ENCODE measurements at regions of chr11 and their contacts with region 1.

Region 1: DNA sequence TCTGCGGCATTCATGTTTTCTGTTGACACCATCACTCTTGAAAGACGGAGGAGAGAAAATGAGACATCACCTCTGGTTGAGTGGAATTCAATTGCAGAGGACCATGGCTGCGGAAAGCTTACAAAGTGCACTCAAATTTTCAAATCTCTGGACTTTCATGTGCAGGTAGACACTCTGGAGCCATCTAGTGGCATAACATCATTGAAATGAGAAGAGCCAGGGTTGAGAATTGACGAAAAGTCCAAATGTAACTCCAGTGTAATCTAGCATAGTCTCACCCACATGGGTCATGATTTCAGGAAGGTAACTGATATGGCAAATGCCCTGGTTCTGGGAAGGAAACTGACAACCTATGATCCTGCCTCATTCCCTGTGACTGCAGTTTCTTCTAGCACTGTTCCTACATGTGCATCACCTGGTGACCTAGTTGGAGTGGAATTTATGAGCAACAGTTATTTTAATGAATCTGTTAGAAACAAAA is 687.8 kb downstream of the KCNA4 start:
- DNase-seq: peak; percentile 95
- ATAC-seq: peak; percentile 80
- H3K4me3 ChIP-seq: no peak overlapping the region
- H3K27ac ChIP-seq: peak overlapping the region; percentile 54
- H3K4me1 ChIP-seq: peaks cover 16% of the 10 kb centered on the region
- H3K27me3 ChIP-seq: no peaks in the 10 kb centered on the region
- CTCF ChIP-seq: peak; percentile 88
- POLR2A ChIP-seq: peak; percentile 62
- RAD21 ChIP-seq: peak; percentile 89

Region 2: DNA sequence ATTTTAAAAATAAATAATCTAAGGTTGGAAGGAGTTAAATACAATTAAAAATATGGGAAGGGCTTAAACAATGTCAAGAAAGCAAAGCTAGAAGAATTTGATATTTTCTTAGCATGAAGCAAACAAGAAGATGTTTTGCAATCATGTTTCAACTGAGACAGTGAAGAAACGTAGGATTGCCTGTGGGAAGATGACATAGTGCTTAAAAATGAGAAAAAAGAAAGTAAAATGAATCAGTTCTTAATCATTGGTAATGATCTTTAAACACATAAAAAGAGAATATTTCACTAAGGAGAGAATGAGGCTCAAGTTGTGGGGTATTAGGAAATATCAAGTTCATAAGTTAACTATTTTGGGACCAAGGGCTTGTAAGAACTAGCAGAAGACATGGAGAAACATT is 365.8 kb before region 1 on chr11:
- CTCF ChIA-PET with region 1: no interaction called
- POLR2A ChIA-PET with region 1: no interaction called
- dilution Hi-C with region 1: no loop called
- in situ Hi-C with region 1: no loop called
- intact Hi-C with region 1: loop called (anchors 2 kb)
- DNase-seq: peak; percentile 83
- ATAC-seq: peak; percentile 36
- H3K4me3 ChIP-seq: no peak overlapping the region
- H3K27ac ChIP-seq: peak overlapping the region; percentile 87; the same call in 1 of the 2 replicates
- H3K4me1 ChIP-seq: peaks cover 13% of the 10 kb centered on the region
- H3K27me3 ChIP-seq: no peaks in the 10 kb centered on the region
- CTCF ChIP-seq: no peak
- POLR2A ChIP-seq: no peak
- RAD21 ChIP-seq: no peak

Region 3: GRCh38 chr11:29119707-29120695 is 209.0 kb before region 1 on chr11:
- CTCF ChIA-PET with region 1: interaction called, 3 read pairs
- POLR2A ChIA-PET with region 1: no interaction called
- dilution Hi-C with region 1: no loop called
- in situ Hi-C with region 1: no loop called
- intact Hi-C with region 1: loop called (anchors 1 kb)
- DNase-seq: peak; percentile 99
- ATAC-seq: peak; percentile 86
- H3K4me3 ChIP-seq: peak overlapping the region; percentile 23; the same call in 1 of the 2 replicates
- H3K27ac ChIP-seq: peak overlapping the region; percentile 92
- H3K4me1 ChIP-seq: peaks cover 9% of the 10 kb centered on the region
- H3K27me3 ChIP-seq: no peaks in the 10 kb centered on the region
- CTCF ChIP-seq: no peak
- POLR2A ChIP-seq: peak; percentile 26; the same call in 1 of the 2 replicates
- RAD21 ChIP-seq: peak; percentile 8; the same call in 1 of the 2 replicates

Region 4: GRCh38 chr11:29173660-29174062 is 155.3 kb before region 1 on chr11:
- CTCF ChIA-PET with region 1: no interaction called
- POLR2A ChIA-PET with region 1: no interaction called
- dilution Hi-C with region 1: no loop called
- in situ Hi-C with region 1: loop called (anchors 10 kb)
- intact Hi-C with region 1: loop called (anchors 5 kb)
- DNase-seq: peak; percentile 99
- ATAC-seq: peak; percentile 86
- H3K4me3 ChIP-seq: no peak overlapping the region
- H3K27ac ChIP-seq: peak overlapping the region; percentile 99; the same call in 1 of the 2 replicates
- H3K4me1 ChIP-seq: peaks cover 6% of the 10 kb centered on the region
- H3K27me3 ChIP-seq: no peaks in the 10 kb centered on the region
- CTCF ChIP-seq: no peak
- POLR2A ChIP-seq: no peak
- RAD21 ChIP-seq: peak; percentile 19; the same call in 1 of the 2 replicates